Activated T-helper 2 cell treated with anti-CD3 and anti-CD28 coated beads, Interferon-gamma antibody, Interleukin-2, Interleukin-4, amounts not matched to agents 10 μg/mL and 5 μg/mL and 100 μg/mL, durations not matched to agents 14 hours and 24 hours and 36 hours (primary cell): ENCODE measurements at regions of chr1 and their contacts with region 1.

Region 1: DNA sequence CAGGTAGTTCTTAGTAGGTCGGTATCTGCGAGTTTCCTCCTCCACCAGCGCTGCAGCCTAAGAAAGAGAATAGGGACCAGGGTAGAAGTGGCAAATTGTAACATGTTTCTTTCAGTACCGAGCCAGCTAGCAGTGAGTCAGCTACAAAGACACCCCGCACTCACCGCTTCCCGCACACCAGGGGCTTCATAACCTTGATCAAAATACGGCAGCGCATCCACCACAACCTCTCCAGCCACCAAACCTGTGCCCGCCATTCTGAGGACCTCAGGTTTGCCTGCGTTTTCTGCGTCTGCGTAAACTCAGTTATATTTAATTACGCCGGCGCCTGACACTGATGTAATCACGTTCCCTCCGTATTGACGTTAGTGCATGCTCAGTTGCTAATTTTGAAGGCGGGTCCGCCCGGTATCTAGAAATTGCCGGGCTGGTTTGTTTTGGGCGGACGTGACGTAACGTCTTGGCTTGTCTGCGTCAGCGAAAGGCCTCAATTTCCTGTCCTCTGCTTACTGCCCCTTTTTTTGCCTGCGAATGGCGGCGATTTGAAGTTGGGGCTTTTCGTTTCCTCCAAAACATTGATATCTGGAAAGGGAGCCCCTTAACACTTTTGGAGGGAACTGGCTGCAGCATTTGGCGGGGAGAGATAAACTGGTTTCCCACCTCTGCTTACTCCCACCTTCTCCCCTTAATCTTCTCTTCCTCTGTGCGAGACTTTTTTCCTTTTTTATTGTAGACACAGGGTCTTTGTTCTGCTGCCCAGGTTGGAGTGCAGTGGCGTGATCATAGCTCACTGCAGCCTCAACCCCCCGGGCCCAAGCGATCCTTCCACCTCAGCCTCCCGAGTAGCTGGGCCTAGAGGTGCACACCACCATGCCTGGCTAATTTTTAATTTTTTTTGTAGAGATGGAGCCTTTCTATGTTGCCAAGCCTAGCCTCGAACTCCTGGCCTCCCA is at the start of gene BCAS2:
- DNase-seq: peak; percentile 95
- H3K4me3 Mint-ChIP-seq: peak within 1 kb of the TSS; percentile 95
- H3K27ac Mint-ChIP-seq: peak within 1 kb of the TSS; percentile 97
- H3K4me1 Mint-ChIP-seq: peaks cover 17% of the 10 kb centered on the region
- H3K27me3 Mint-ChIP-seq: peaks cover 2% of the 10 kb centered on the region
- total RNA-seq, gene BCAS2: 52.1 and 54.1 TPM in 2 replicates

Region 2: DNA sequence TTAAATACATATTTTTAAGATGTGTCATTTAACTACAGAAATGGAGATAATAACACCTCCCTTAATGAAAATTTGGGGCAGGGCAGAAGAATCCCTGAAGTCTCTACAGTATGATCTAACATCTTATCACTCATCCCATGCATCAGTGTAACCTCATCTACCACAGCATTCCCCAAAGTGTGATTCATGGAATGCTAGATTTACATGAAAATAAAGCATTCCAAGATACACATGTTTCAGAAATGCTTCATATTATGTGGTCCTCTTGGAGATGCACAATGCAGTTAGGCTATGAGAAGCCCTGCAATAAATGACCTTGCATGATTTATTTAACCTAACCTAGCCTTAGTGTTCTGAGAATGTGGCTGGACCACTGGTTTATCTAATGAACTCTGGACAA is 261.0 kb before region 1 on chr1:
- intact Hi-C with region 1: no loop called
- DNase-seq: no peak
- H3K4me3 Mint-ChIP-seq: no peak overlapping the region
- H3K27ac Mint-ChIP-seq: no peak overlapping the region
- H3K4me1 Mint-ChIP-seq: no peaks in the 10 kb centered on the region
- H3K27me3 Mint-ChIP-seq: peaks cover 8% of the 10 kb centered on the region

Region 3: DNA sequence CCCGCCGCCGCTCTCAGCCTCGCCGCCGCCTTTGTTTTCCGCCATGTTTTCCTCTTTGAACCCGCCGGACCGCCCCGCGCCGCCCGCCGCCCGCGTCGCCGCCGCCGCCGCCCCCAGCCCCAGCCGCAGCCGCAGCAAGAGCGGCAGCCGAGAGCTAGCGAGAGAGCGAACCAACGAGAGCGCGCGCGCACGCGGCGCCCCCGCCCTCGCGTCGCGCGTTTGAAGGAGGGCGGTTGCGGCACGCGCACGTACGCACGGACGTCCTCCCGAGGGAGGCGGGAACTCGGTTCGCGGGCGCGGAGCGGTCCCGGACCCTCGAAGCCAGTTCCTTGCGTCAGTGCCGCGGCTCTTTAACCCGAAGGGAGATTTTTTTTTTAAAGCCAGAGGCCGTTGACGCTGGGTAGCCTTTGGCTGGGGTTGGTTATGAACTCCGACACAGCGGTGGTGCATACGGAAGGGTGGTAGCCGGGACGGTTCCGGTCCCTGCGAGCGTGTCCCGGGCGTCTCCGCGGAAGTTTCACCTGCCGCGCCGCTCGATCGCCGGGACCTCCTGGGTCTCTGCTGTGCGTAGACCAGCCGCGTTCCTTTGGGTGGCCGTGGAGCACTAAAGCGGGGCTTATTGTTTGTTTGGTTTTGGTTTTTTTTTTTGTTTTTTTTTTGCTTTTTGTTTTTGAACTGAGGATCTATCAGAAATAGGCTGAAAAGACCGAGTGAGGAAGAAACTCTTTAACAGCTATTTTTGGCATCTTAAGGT is 70.4 kb before region 1 on chr1 and contains the start of gene TRIM33:
- intact Hi-C with region 1: loop called (anchors 2 kb)
- DNase-seq: peak; percentile 91
- H3K4me3 Mint-ChIP-seq: peak within 1 kb of the TSS; percentile 88
- H3K27ac Mint-ChIP-seq: peak within 1 kb of the TSS; percentile 97
- H3K4me1 Mint-ChIP-seq: peaks cover 41% of the 10 kb centered on the region
- H3K27me3 Mint-ChIP-seq: no peaks in the 10 kb centered on the region
- total RNA-seq, gene TRIM33: 41.5 and 44.7 TPM in 2 replicates

Region 4: DNA sequence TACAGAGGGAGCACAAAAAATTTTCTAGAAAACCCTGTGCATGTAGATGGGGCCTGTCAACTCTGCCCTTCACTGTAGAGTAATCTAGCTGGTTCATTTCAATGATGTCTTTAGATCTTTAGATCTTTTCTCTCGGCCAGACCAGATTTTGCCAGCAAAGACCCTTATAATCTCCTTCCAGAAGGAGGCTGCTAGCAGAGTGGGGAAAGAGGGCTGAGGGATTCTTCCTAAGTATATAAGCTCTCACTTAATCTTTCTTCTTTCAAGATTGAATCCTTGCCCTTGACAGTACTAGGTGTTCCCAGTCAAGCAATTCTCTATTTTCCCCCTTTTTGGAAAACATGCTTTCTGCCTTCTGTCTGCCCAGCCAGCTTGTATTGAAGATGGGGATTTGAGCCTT is 34.5 kb before region 1 on chr1:
- intact Hi-C with region 1: no loop called
- DNase-seq: no peak
- H3K4me3 Mint-ChIP-seq: no peak overlapping the region
- H3K27ac Mint-ChIP-seq: no peak overlapping the region
- H3K4me1 Mint-ChIP-seq: no peaks in the 10 kb centered on the region
- H3K27me3 Mint-ChIP-seq: peaks cover 3% of the 10 kb centered on the region

Region 5: DNA sequence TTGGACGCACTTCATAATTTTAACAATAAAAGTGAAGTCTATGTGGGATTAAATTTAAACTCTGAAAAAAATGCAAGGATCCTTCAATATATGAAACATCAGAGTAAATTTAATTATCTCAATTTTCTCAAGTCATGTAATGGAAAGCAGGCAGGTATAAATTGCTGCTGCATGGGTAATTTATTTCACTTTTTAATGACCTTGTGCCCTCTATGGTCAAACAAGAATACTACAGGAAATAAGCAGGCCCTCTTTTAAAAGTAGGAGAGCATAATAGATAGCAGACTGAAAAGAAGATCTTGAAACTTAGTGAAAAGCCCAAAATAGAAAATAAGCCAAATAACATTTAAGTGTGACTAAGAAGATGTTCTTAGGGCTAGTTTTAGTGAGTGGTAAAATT is 23.1 kb before region 1 on chr1:
- intact Hi-C with region 1: no loop called
- DNase-seq: no peak
- H3K4me3 Mint-ChIP-seq: no peak overlapping the region
- H3K27ac Mint-ChIP-seq: no peak overlapping the region
- H3K4me1 Mint-ChIP-seq: no peaks in the 10 kb centered on the region
- H3K27me3 Mint-ChIP-seq: no peaks in the 10 kb centered on the region

Region 6: GRCh38 chr1:114716304-114717170 is 134.9 kb after region 1 on chr1 and contains the start of gene NRAS:
- intact Hi-C with region 1: loop called (anchors 1 kb)
- DNase-seq: peak; percentile 92
- H3K4me3 Mint-ChIP-seq: peak within 1 kb of the TSS; percentile 95
- H3K27ac Mint-ChIP-seq: peak within 1 kb of the TSS; percentile 93
- H3K4me1 Mint-ChIP-seq: peaks cover 26% of the 10 kb centered on the region
- H3K27me3 Mint-ChIP-seq: no peaks in the 10 kb centered on the region
- total RNA-seq, gene NRAS: 63.3 and 64.5 TPM in 2 replicates

Region 7: DNA sequence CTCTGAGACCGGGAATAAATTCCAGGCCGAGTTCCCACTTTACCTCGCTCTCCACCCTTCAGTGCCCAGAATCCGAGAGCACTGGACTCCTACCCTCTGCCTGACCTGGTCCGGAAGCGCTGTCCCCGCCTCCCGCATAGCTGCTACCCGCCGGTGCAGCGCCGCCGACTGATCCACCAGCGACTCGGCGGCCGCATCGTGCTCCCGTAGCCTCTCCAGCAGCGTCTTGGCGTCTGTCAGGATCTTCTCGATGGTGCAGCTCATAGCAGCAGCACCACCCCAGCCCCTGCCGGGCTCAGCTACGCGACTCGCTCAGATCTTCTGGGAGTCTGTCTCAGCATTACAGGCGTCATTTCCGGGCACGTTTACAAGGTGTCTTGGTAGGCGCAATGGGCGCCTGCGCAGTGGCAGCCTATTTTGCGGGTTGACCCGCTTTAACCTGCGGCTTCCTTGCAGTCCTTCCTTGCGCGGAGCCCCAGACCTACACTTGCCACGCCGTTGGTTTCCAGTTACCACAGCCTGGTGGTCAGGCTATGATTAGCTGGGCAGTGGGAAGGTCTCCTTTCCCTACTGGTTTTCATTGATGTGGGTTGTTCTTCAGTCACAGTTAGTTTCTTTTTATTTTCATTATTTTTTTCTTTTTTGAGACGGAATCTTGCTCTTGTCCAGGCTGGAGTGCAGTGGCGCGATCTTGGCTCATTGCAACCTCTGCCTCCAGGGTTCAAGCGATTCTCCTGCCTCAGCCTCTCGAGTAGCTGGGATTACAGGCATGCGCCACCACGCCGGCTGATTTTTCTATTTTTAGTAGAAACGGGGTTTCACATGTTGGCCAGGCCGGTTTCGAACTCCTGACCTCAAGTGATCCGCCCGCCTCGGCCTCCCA is 199.0 kb after region 1 on chr1 and contains the start of gene SIKE1:
- intact Hi-C with region 1: loop called (anchors 1 kb)
- DNase-seq: peak; percentile 93
- H3K4me3 Mint-ChIP-seq: peak within 1 kb of the TSS; percentile 99
- H3K27ac Mint-ChIP-seq: peak within 1 kb of the TSS; percentile 98
- H3K4me1 Mint-ChIP-seq: peaks cover 21% of the 10 kb centered on the region
- H3K27me3 Mint-ChIP-seq: peaks cover 6% of the 10 kb centered on the region
- total RNA-seq, gene SIKE1: 57.6 and 64.2 TPM in 2 replicates